ENCODE measurements at regions of chr1 and their contacts with region 1.

Region 1: DNA sequence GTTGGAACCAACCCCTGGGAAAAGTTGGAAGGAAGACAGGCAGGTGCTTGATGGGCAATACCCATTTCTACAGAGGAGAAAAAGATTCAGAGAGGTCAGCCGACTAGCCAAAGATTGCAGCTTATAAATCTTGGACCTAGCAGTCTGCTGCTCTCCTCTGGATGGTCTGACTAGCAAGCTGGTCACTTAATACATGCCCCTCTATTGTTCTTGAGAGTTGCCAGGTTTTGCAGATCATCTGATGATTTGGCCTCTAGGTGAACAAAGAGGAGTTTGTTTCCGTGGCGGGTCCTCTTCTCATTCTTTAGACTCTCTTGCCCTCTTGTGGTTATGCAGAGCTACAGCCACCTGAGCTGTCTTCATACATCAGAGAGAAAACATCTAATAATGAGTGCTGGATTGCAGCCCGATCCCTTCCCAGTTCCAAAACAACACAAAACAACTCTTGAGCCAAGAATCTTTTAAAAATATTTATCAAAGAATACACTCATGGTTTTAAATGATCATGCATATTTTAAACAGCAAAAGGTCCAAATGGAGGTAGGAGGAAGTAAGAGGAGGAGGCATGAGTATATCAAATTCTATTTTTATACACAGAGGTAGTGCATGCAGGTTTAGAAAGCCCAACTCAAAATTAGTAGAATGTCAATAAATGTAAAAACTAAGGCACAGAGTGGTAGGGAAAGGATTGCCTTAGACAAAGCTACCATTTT is 115.7 kb downstream of the SLC30A10 start:
- DNase-seq: peak; percentile 54
- H3K4me3 ChIP-seq: no peak overlapping the region
- H3K27ac ChIP-seq: no peak overlapping the region
- H3K27me3 ChIP-seq: peaks cover 23% of the 10 kb centered on the region
- CTCF ChIP-seq: peak; percentile 95

Region 2: DNA sequence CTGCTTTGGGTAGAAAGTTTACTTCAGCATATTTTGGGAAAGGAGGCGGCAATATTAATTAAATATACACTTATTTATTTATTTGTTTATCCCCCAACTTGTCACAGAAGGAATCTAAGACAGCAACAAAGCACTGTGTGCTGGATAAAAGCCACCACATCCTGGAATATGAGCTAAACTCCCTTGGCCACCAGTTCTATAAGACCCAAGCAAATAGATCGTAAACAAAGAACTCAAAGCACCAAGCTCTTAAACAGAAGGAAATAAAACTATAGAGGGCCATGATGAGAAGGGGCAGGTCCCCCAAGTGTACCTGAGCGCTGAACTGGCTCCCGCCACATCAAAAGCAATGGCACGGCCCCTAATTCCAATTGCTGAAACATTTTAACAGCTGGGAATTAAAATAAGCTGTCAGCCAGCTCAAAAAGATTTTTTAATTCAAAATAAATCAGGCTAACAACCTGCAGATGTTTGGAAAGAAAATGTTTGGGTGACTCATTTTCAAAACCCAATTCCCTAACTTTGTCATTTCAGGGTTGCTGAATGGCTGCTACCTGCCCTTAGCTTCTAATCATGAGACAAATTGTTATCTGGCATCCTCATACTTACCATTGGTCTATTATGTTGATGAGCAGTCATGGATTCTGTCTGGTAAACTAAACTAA is 11.4 kb before region 1 on chr1:
- CTCF ChIA-PET with region 1: interaction called, 21 read pairs
- POLR2A ChIA-PET with region 1: no interaction called
- DNase-seq: no peak
- H3K4me3 ChIP-seq: no peak overlapping the region
- H3K27ac ChIP-seq: no peak overlapping the region
- H3K27me3 ChIP-seq: no peaks in the 10 kb centered on the region
- CTCF ChIP-seq: no peak

Measured in AG04450 (cell line).